ENCODE measurements at regions of chr4 and their contacts with region 1.

Region 1: GRCh38 chr4:121096629-121097028 is 24.3 kb upstream of the NDNF start:
- DNase-seq: no peak
- H3K4me3 Mint-ChIP-seq: no peak overlapping the region
- H3K27ac Mint-ChIP-seq: no peak overlapping the region
- H3K4me1 Mint-ChIP-seq: no peaks in the 10 kb centered on the region
- H3K27me3 Mint-ChIP-seq: peaks cover 31% of the 10 kb centered on the region

Region 2: DNA sequence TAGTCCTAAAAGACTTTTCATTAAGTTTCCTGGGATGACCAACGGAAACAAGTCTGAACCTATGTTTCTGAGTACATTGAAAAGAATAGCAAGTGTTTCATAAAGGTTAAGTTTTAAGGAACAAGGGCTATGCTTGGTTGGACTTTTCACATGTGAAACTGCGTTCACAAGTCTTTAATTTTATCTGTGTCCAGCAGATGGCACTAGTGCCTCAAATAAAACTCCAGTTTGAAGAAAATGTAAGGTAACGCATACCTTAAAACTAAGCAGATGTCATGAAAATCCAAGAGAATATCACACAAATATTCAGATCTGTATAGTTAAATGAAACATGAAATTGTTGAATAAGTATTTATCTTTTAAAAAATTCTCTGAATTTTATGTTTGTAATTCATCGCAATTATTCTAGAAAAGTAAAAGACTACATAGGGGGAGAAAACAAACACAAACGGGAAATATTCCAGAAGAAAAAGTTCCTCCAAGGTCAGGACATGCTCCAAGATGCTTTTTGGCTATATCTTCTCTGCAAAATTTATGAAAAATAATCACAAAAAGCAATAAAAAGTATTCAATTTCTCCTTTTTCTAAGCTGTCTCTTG is 940.4 kb before region 1 on chr4:
- intact Hi-C with region 1: loop called (anchors 1 kb)
- DNase-seq: no peak
- H3K4me3 Mint-ChIP-seq: no peak overlapping the region
- H3K27ac Mint-ChIP-seq: no peak overlapping the region
- H3K4me1 Mint-ChIP-seq: no peaks in the 10 kb centered on the region
- H3K27me3 Mint-ChIP-seq: peaks cover 7% of the 10 kb centered on the region

Region 3: GRCh38 chr4:120611092-120611491 is 485.5 kb before region 1 on chr4:
- intact Hi-C with region 1: no loop called
- DNase-seq: no peak
- H3K4me3 Mint-ChIP-seq: no peak overlapping the region
- H3K27ac Mint-ChIP-seq: no peak overlapping the region
- H3K4me1 Mint-ChIP-seq: no peaks in the 10 kb centered on the region
- H3K27me3 Mint-ChIP-seq: no peaks in the 10 kb centered on the region

Region 4: DNA sequence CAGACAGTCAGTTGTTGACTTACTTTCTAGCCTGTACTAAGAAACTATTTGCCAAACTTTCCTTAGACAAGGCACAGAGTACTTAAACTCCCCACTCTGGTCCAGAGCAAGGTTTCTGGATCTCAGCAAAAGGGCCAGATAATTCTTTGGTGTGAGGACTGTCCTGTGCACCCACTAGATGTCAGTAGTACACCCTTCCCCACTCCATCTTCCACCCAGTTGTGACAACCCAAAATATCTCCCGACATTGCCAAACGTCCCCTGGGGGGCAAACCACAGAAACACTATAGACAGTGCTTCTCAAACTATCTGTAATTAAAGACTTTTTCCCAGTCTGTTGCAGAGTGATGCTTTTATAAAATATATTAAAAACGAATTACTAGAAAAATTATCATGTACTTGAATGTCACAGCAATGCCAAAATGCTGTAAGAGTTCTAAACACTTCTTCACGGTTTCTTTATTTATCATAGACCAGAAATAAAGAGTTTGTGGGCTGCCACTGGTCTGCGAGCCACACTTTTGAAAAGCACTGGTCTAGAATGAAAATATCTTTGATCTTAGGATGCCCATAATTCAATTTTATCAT is 377.6 kb before region 1 on chr4:
- intact Hi-C with region 1: loop called (anchors 5 kb)
- DNase-seq: no peak
- H3K4me3 Mint-ChIP-seq: no peak overlapping the region
- H3K27ac Mint-ChIP-seq: no peak overlapping the region
- H3K4me1 Mint-ChIP-seq: no peaks in the 10 kb centered on the region
- H3K27me3 Mint-ChIP-seq: peaks cover 14% of the 10 kb centered on the region

Measured in activated T-helper 2 cell treated with anti-CD3 and anti-CD28 coated beads, Interferon-gamma antibody, Interleukin-2, Interleukin-4, amounts not matched to agents 10 μg/mL and 5 μg/mL and 100 μg/mL, durations not matched to agents 14 hours and 24 hours and 36 hours (primary cell).